Cardiac septum (tissue), 1 donor: ENCODE measurements at regions of chr4 and their contacts with region 1.

Region 1: DNA sequence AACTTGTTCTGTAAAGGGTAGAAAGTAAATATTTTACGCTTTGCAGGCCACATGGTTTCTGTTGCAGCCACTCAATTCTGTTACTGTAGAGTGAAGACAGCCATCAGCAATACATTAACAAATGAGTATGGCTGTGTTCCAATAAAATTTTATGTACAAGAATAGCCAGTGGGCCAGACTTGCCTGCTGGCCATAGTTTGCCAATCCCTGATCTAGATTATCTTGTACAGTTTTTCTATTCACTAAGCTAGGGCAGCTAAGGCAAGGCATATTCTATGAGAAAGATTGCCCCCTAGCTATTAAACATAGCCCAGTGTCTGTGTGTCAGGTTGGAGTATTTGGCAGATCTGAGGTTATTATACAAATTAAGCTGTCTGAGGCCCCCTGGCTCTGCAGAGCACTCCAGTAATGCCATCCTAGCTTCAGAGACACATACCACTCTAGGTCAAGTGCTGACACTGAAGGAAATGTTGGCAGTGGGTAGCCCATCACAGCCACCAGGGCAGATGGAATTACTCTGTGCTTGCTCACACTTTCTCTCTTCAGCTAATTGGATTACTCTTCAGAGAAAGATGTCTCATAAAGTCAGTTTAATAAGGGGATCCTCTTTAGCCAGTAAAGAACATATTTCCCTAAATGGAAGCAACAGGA is 40.7 kb downstream of the MTTP start:
- DNase-seq: no peak

Region 2: GRCh38 chr4:99642725-99643489 is 27.6 kb after region 1 on chr4:
- intact Hi-C with region 1: loop called (anchors 1 kb)
- DNase-seq: no peak